HCT116 (cell line): ENCODE measurements at regions of chr15 and their contacts with region 1.

Region 1: DNA sequence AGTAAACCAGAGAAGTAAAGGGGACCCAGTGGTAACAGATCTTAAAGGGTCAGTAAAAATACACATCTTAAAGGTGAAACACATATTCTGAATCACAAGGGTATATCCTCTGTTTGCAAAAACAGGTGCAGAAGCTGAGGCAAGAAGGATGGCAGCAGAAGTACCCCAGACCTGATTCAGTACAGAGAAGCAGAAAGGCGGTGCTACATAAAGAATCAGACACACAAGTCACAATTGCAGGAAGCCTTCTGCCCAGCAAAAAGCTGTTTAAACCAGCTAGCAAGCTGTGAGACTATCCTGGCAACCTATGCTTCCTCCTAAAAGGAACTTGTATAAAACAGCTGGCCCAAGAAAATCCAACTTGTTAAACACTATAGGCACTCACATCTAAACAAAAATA is 49.4 kb downstream of the ZNF280D start:
- DNase-seq: no peak
- ATAC-seq: no peak
- H3K4me3 ChIP-seq: no peak overlapping the region
- H3K27ac ChIP-seq: no peak overlapping the region
- H3K4me1 ChIP-seq: no peaks in the 10 kb centered on the region
- H3K27me3 ChIP-seq: no peaks in the 10 kb centered on the region
- CTCF ChIP-seq: no peak
- POLR2A ChIP-seq: no peak
- RAD21 ChIP-seq: no peak

Region 2: GRCh38 chr15:56631765-56632164 is 52.1 kb before region 1 on chr15:
- CTCF ChIA-PET with region 1: no interaction called
- POLR2A ChIA-PET with region 1: no interaction called
- RAD21 ChIA-PET with region 1: no interaction called
- intact Hi-C with region 1: no loop called
- DNase-seq: no peak
- ATAC-seq: no peak
- H3K4me3 ChIP-seq: no peak overlapping the region
- H3K27ac ChIP-seq: no peak overlapping the region
- H3K4me1 ChIP-seq: no peaks in the 10 kb centered on the region
- H3K27me3 ChIP-seq: no peaks in the 10 kb centered on the region
- CTCF ChIP-seq: no peak
- POLR2A ChIP-seq: no peak
- RAD21 ChIP-seq: no peak

Region 3: DNA sequence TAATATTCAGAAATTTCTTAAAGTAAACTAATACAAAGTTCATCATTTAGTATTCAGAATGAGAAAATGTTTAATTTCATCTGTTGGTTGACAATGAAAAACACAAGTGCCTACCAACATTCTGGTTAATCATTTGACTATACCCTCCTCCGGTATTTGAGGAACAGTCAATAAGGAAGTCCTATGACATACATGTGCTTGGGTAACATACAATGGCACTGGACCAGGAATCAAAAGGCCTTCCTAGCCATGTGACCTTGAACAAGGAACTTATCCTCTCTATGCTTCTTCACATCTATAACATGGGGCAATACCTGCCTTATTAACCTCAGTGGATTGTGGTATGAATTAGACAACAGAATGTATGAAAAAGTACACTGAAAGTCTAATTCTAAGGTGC is 16.4 kb before region 1 on chr15:
- CTCF ChIA-PET with region 1: no interaction called
- POLR2A ChIA-PET with region 1: no interaction called
- RAD21 ChIA-PET with region 1: no interaction called
- intact Hi-C with region 1: loop called (anchors 1 kb)
- DNase-seq: no peak
- ATAC-seq: no peak
- H3K4me3 ChIP-seq: no peak overlapping the region
- H3K27ac ChIP-seq: no peak overlapping the region
- H3K4me1 ChIP-seq: no peaks in the 10 kb centered on the region
- H3K27me3 ChIP-seq: no peaks in the 10 kb centered on the region
- CTCF ChIP-seq: no peak
- POLR2A ChIP-seq: no peak
- RAD21 ChIP-seq: no peak

Region 4: DNA sequence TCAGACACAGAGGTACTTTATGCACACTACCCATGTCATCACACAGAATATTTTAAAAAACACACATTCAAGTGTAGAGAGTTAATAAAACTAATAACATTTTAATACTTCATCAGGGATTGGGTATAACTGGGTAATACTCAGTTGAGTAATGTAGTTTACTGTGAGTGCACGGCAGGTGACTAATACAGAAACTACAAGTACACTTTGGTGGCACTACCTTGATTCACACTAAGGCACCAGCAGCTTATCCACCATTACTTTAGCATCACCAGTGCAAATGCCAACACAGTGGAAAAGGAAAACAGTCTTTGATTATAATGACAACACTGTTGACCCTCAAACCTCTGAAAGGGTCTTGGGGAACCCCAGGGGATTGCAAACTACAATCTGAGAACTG is 15.8 kb after region 1 on chr15:
- CTCF ChIA-PET with region 1: no interaction called
- POLR2A ChIA-PET with region 1: no interaction called
- RAD21 ChIA-PET with region 1: no interaction called
- intact Hi-C with region 1: no loop called
- DNase-seq: no peak
- ATAC-seq: no peak
- H3K4me3 ChIP-seq: no peak overlapping the region
- H3K27ac ChIP-seq: no peak overlapping the region
- H3K4me1 ChIP-seq: no peaks in the 10 kb centered on the region
- H3K27me3 ChIP-seq: no peaks in the 10 kb centered on the region
- CTCF ChIP-seq: no peak
- POLR2A ChIP-seq: no peak
- RAD21 ChIP-seq: no peak